WTC11 (cell line): ENCODE measurements at regions of chr14 and their contacts with region 1.

Region 1: GRCh38 chr14:69346710-69347109 is 51.4 kb downstream of the ERH start:
- DNase-seq: peak; percentile 91
- ATAC-seq: peak; percentile 94
- H3K4me3 Mint-ChIP-seq: no peak overlapping the region
- H3K27ac Mint-ChIP-seq: no peak overlapping the region
- H3K4me1 Mint-ChIP-seq: peaks cover 21% of the 10 kb centered on the region
- H3K27me3 Mint-ChIP-seq: no peaks in the 10 kb centered on the region; the same call in 1 of the 2 replicates
- CTCF ChIP-seq: peak; percentile 61

Region 2: DNA sequence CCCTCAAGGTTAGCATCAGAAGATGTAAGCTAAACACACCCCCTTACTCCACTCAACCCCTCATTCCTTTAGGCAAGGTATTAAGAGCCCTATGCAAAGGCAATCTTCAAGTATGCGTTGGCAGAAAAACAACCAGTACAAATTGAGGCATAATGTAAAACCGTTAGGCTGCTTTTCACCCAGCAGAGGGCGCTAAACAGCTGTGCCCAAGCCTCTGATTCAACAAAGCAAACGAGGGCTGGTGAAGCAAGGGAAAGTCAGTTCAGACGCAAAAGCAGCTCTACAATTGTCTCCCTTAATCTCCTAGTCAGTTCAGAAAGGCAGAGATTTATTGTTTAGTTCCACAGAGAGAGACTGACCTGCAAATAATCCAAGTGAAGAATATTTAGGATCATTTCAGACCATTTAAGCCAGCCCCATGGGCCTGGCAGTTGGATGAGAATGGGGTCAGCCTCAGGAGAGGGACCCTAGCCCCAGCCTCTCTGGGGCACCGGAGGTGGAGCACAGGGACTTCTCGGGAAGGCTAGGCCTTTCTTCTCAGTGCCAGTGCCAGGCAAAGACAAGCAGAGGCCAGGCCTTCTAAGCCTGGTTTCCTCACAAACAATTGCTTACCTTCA is 217.3 kb before region 1 on chr14:
- CTCF ChIA-PET with region 1: interaction called, 20 read pairs
- POLR2A ChIA-PET with region 1: no interaction called
- DNase-seq: peak; percentile 64
- ATAC-seq: peak; percentile 90
- H3K4me3 Mint-ChIP-seq: no peak overlapping the region; the same call in 1 of the 2 replicates
- H3K27ac Mint-ChIP-seq: peak overlapping the region; percentile 46
- H3K4me1 Mint-ChIP-seq: peaks cover 10% of the 10 kb centered on the region
- H3K27me3 Mint-ChIP-seq: no peaks in the 10 kb centered on the region
- CTCF ChIP-seq: peak; percentile 85

Region 3: GRCh38 chr14:69242311-69243224 is 104.1 kb before region 1 on chr14:
- CTCF ChIA-PET with region 1: interaction called, 26 read pairs
- POLR2A ChIA-PET with region 1: interaction called, 3 read pairs
- DNase-seq: peak; percentile 67
- ATAC-seq: peak; percentile 80
- H3K4me3 Mint-ChIP-seq: no peak overlapping the region
- H3K27ac Mint-ChIP-seq: no peak overlapping the region
- H3K4me1 Mint-ChIP-seq: peaks cover 6% of the 10 kb centered on the region
- H3K27me3 Mint-ChIP-seq: no peaks in the 10 kb centered on the region
- CTCF ChIP-seq: peak; percentile 73

Region 4: DNA sequence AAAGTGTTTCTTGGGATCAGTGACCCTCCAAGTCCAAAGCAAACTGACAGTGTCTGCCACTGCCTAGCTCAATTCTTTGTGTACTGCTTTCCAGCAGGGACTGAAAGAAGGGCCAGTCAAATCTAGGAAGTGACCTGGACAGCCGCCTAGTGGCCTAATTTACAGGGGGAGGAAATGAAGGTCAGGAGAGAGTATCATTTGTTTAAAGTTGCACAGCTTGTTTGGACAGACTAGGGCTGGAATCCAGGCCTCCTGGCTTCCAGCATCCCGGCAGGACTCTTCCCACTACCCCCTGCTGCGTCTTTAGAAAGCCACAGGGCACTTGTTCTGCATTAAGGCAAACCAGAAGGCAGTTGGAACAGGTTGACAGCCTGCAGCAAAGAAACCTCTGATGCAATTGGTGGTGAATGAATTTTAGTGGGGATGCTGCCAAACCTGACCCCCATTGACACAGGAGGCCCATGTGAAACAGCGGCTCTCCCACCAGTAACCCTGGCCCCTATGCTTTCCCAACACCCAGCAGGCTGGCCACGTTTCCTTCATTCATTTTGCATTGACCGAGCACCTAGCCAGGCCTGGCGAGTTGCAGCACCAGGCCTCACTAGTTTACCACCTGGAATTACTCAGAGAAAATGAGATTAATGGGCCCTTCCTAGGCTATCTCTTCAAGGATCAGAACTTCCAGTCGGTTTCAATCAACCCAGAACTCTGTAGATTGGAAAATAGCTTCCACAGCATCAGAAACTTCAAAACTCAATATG is 58.5 kb before region 1 on chr14:
- CTCF ChIA-PET with region 1: interaction called, 29 read pairs
- POLR2A ChIA-PET with region 1: no interaction called
- DNase-seq: no peak
- ATAC-seq: peak; percentile 49
- H3K4me3 Mint-ChIP-seq: no peak overlapping the region
- H3K27ac Mint-ChIP-seq: no peak overlapping the region
- H3K4me1 Mint-ChIP-seq: peaks cover 8% of the 10 kb centered on the region
- H3K27me3 Mint-ChIP-seq: no peaks in the 10 kb centered on the region
- CTCF ChIP-seq: no peak

Region 5: DNA sequence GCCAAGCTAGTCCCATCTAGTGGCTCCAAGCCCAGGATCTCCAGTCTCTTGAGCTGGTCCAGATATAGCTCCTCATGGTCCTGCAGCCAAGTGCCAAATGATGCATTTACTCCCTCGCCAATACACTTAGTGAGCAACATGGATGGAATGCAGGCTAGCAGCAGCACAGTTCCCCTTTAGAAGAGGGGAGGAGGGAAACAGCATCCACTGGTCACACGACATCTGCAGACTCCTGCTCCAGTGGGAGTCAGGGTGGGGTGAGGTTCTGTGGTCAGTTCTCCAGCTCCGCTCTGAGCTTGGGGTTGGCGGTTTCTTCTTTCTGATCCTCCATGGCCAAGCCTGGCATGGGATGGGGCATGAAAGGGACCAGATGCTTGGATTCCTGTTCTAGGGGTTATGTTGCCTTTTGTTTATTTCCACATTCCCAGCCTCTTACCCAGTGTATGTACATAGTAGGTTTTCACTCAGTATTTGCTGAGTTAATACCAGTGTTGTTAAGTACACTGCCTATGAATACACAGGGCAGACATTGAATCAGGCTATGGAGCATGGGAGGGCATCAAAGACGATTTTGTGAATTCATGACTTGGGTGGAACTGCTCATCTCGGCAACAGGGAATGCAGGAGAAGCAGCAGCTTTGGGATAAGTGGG is 29.5 kb before region 1 on chr14:
- CTCF ChIA-PET with region 1: interaction called, 17 read pairs
- POLR2A ChIA-PET with region 1: no interaction called
- DNase-seq: peak; percentile 1
- ATAC-seq: no peak
- H3K4me3 Mint-ChIP-seq: no peak overlapping the region
- H3K27ac Mint-ChIP-seq: no peak overlapping the region
- H3K4me1 Mint-ChIP-seq: peaks cover 8% of the 10 kb centered on the region
- H3K27me3 Mint-ChIP-seq: no peaks in the 10 kb centered on the region
- CTCF ChIP-seq: no peak

Region 6: GRCh38 chr14:69335371-69335771 is 11.3 kb before region 1 on chr14:
- CTCF ChIA-PET with region 1: interaction called, 56 read pairs
- POLR2A ChIA-PET with region 1: no interaction called
- DNase-seq: no peak
- ATAC-seq: no peak
- H3K4me3 Mint-ChIP-seq: no peak overlapping the region
- H3K27ac Mint-ChIP-seq: no peak overlapping the region
- H3K4me1 Mint-ChIP-seq: no peaks in the 10 kb centered on the region
- H3K27me3 Mint-ChIP-seq: no peaks in the 10 kb centered on the region
- CTCF ChIP-seq: no peak

Region 7: GRCh38 chr14:69424149-69424923 is 77.6 kb after region 1 on chr14:
- CTCF ChIA-PET with region 1: no interaction called
- POLR2A ChIA-PET with region 1: no interaction called
- DNase-seq: no peak
- ATAC-seq: no peak
- H3K4me3 Mint-ChIP-seq: no peak overlapping the region
- H3K27ac Mint-ChIP-seq: peak overlapping the region; percentile 28; the same call in 1 of the 2 replicates
- H3K4me1 Mint-ChIP-seq: no peaks in the 10 kb centered on the region
- H3K27me3 Mint-ChIP-seq: no peaks in the 10 kb centered on the region
- CTCF ChIP-seq: no peak